ENCODE measurements at regions of chr2 and their contacts with region 1.

Region 1: GRCh38 chr2:171522052-171522787 is at the start of gene CYBRD1:
- DNase-seq: peak; percentile 71
- H3K4me3 Mint-ChIP-seq: peak within 1 kb of the TSS; percentile 88
- H3K27ac Mint-ChIP-seq: peak within 1 kb of the TSS; percentile 78
- H3K4me1 Mint-ChIP-seq: peaks cover 7% of the 10 kb centered on the region
- H3K27me3 Mint-ChIP-seq: peaks cover 46% of the 10 kb centered on the region
- total RNA-seq, gene CYBRD1: 4.7 and 5.1 TPM in 2 replicates

Region 2: DNA sequence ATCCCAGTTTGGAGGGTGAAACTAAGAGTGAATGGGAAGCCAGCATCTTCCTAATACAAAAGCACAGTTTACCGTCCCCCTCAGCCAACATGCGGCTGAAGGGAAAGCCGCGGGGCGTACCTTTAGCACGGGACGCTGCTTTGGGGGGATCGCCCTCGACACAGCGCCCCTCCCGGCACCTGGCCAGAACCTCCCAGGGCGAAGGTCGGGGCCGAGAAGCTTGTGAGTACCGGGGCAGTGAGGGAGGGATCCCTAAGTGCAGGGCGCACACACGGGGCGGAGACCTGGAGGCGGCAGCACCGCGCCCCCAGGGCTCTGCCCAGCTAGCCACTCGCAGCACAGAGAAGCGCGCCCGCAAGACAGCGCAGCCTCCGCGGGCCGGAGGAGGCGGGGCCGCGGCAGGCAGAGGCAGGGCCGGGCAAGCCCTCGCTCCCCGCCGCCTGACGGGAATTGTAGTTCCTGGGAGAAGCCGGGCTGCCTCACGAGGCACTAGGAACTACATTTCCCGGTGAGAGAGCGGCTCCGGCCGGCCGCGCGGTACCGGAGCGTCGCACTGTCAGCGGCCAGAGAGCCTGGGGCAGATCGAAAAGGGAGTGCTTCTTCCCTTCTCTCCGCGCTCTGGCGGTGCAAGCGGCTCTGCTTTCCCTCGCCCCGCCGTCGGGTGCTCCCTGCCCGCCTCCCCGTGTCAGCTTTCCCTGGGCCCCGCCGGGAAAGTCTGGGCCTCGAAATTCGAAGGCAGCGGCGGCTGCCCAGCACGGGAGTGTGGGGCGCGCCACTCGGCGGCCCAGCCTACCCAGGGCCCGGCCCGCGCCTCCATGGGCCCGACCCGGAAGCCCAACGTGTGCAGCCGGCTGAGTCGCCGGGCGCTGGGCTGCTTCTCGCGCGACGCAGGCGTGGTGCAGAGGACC is 88.2 kb before region 1 on chr2 and contains the starts of genes DCAF17 and METTL8:
- intact Hi-C with region 1: loop called (anchors 1 kb)
- DNase-seq: peak; percentile 98
- H3K4me3 Mint-ChIP-seq: peak within 1 kb of the TSS; percentile 82
- H3K27ac Mint-ChIP-seq: peak within 1 kb of the TSS; percentile 88
- H3K4me1 Mint-ChIP-seq: peaks cover 23% of the 10 kb centered on the region
- H3K27me3 Mint-ChIP-seq: no peaks in the 10 kb centered on the region
- total RNA-seq, gene DCAF17: 27.3 and 27.4 TPM in 2 replicates
- total RNA-seq, gene METTL8: 33.1 and 42.9 TPM in 2 replicates

Region 3: DNA sequence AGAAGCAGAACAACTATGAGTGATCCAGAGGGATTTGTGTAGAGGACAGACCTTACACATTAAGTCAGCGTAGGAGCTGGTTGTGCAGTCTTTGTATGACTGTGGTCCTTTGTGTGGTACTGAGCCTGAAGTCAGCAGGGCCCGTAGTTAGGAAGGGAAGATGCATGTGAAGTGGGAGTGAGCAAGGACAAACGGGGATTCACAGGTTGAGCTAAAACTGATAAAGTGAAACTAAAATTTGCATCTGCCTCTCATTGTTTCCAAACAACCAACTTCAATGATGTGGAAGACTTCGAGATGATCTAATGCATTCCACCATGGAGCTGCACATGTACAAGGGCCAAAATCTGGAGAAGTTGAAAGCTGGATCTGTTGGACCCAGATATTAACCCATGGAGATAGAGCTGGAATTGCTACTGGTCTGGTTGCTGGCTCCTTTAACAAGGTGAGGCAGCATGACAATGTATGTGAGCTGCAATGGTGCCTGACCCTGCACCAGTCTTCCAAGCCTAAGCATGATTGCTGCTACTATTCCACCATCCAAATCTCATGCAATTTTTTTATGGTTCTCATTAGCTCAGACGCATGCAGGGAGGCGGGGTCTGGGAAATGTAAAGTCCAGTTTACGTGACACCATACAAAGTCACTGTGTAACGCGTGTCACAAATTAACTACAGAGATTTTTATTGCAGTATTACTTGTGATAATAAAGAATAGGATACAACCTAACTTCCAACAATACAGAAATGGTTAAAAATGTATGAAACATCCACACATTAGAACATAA is 12.1 kb before region 1 on chr2:
- intact Hi-C with region 1: loop called (anchors 1 kb)
- DNase-seq: no peak
- H3K4me3 Mint-ChIP-seq: no peak overlapping the region
- H3K27ac Mint-ChIP-seq: no peak overlapping the region
- H3K4me1 Mint-ChIP-seq: peaks cover 9% of the 10 kb centered on the region
- H3K27me3 Mint-ChIP-seq: peaks cover 7% of the 10 kb centered on the region